Naive thymus-derived CD4-positive, alpha-beta T cell (primary cell): ENCODE measurements at regions of chr10 and their contacts with region 1.

Region 1: GRCh38 chr10:30751678-30752331 is 122.3 kb upstream of the LYZL2 start:
- DNase-seq: peak in 6 of 9 donors; percentile 40 to 76 (median 61)
- ATAC-seq: no peak
- H3K4me3 ChIP-seq: no peak overlapping the region
- H3K4me3 Mint-ChIP-seq: peak overlapping the region in 6 of 10 donors; percentile 4 to 59 (median 20)
- H3K27ac ChIP-seq: no peak overlapping the region
- H3K27ac Mint-ChIP-seq: peak overlapping the region in 3 of 9 donors; percentile 9 to 76 (median 32)
- H3K4me1 ChIP-seq: peaks cover 0 to 35% of the 10 kb centered on the region in 2 donors
- H3K4me1 Mint-ChIP-seq: peaks cover 5 to 44% (median 14%) of the 10 kb centered on the region in 7 donors
- H3K27me3 ChIP-seq: no peaks in the 10 kb centered on the region
- H3K27me3 Mint-ChIP-seq: no peaks in the 10 kb centered on the region

Region 2: DNA sequence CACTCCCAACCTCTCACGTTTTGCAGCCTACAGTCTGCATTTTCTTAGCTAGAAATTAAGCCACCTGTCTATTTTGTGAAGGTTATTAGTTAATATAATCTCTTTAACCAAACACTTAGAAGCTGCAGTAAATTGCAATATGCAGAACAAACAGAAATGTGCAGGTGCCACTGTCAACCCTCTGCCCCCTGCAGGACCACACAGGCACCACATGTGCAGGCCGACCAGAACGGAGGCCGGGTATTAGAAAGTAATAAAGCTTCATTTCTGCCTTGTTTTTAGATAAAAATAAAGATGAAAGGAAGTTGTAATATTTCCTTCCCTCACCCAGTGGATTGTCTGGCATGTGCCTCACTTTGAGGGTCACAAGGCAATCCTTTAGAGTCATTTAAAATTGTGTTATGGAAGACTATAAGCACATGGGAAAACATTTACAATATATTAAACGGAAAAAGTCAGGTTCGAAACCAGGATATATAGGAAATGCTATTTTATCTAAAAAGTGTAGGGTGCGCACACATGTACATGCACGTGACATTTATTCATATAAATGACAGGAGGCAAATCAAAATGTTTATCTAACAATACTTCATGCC is 1018.6 kb after region 1 on chr10:
- CTCF ChIA-PET with region 1: interaction called, 6 read pairs
- POLR2A ChIA-PET with region 1: no interaction called
- intact Hi-C with region 1: loop called in 1 of 2 experiments (anchors 1 kb)
- DNase-seq: peak; percentile 27 to 69 (median 57)
- ATAC-seq: peak; percentile 92
- H3K4me3 ChIP-seq: no peak overlapping the region
- H3K4me3 Mint-ChIP-seq: no peak overlapping the region
- H3K27ac ChIP-seq: no peak overlapping the region
- H3K27ac Mint-ChIP-seq: no peak overlapping the region
- H3K4me1 ChIP-seq: no peaks in the 10 kb centered on the region
- H3K4me1 Mint-ChIP-seq: no peaks in the 10 kb centered on the region
- H3K27me3 ChIP-seq: no peaks in the 10 kb centered on the region
- H3K27me3 Mint-ChIP-seq: no peaks in the 10 kb centered on the region

Region 3: GRCh38 chr10:32131388-32131787 is 1379.6 kb after region 1 on chr10:
- CTCF ChIA-PET with region 1: no interaction called
- POLR2A ChIA-PET with region 1: no interaction called
- intact Hi-C with region 1: no loop called
- DNase-seq: peak in 2 of 9 donors; percentile 11 to 28
- ATAC-seq: no peak
- H3K4me3 ChIP-seq: no peak overlapping the region
- H3K4me3 Mint-ChIP-seq: peak overlapping the region in 1 of 10 donors; percentile 13
- H3K27ac ChIP-seq: no peak overlapping the region
- H3K27ac Mint-ChIP-seq: peak overlapping the region in 5 of 9 donors; percentile 4 to 80 (median 54)
- H3K4me1 ChIP-seq: peaks cover 0 to 3% of the 10 kb centered on the region in 2 donors
- H3K4me1 Mint-ChIP-seq: peaks cover 0 to 16% (median 12%) of the 10 kb centered on the region in 7 donors
- H3K27me3 ChIP-seq: no peaks in the 10 kb centered on the region
- H3K27me3 Mint-ChIP-seq: no peaks in the 10 kb centered on the region